Endothelial cell of umbilical vein (primary cell): ENCODE measurements at regions of chr20 and their contacts with region 1.

Region 1: DNA sequence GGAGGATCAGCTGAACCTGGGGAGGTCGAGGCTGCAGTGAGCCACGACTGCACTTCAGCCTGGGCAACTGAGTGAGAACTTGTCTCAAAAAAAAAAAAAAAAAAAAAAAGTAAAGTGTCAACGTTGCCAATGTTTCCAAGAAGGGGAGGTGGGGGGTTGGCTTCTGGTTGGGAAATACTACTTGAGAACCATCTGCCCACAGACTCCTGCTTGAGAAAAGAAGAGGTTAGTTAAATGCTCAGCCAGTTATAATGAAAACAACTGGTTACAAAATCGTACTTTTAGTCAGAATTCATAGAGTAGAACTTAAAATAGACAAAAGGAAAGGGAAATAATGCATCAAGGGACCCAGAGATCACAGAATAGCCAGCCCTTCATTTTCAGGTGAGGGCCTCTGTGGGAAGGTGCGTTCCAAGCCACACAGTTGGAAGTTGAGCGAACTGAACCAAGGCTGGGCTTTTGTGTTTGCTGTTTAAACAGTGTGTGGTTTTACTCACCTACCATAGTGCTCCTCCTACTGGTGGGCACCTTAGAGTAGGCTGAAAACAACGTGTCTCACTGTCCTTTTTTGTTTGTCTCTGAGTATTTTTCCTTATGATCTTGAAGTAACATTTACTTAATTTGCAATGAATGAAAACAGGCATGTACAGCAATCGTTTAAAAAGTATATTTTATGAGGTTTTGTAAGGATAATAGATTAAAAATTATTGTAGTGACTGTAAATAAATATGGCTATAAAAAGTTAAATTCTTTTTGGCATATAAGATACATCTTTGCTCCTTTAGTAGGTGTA is 200.7 kb downstream of the BCAS1 start:
- DNase-seq: peak; percentile 82
- H3K4me3 ChIP-seq: no peak overlapping the region
- H3K27ac ChIP-seq: no peak overlapping the region
- H3K4me1 ChIP-seq: peaks cover 22% of the 10 kb centered on the region
- H3K27me3 ChIP-seq: no peaks in the 10 kb centered on the region
- CTCF ChIP-seq: peak; percentile 74 to 77
- POLR2A ChIP-seq: no peak

Region 2: GRCh38 chr20:53578492-53579222 is 291.0 kb before region 1 on chr20:
- CTCF ChIA-PET with region 1: interaction called, 11 read pairs
- POLR2A ChIA-PET with region 1: no interaction called
- dilution Hi-C with region 1: no loop called
- intact Hi-C with region 1: loop called (anchors 1 kb)
- DNase-seq: peak; percentile 90
- H3K4me3 ChIP-seq: peak overlapping the region in 1 of 3 experiments; percentile 23
- H3K27ac ChIP-seq: peak overlapping the region; percentile 43
- H3K4me1 ChIP-seq: peaks cover 20% of the 10 kb centered on the region
- H3K27me3 ChIP-seq: no peaks in the 10 kb centered on the region
- CTCF ChIP-seq: peak; percentile 60 to 75
- POLR2A ChIP-seq: peak; percentile 13

Region 3: GRCh38 chr20:53643031-53643832 is 226.4 kb before region 1 on chr20:
- CTCF ChIA-PET with region 1: interaction called, 3 read pairs
- POLR2A ChIA-PET with region 1: no interaction called
- dilution Hi-C with region 1: no loop called
- intact Hi-C with region 1: loop called (anchors 5 kb)
- DNase-seq: peak; percentile 91
- H3K4me3 ChIP-seq: peak overlapping the region in 1 of 3 experiments; percentile 28
- H3K27ac ChIP-seq: peak overlapping the region; percentile 89
- H3K4me1 ChIP-seq: peaks cover 20% of the 10 kb centered on the region
- H3K27me3 ChIP-seq: no peaks in the 10 kb centered on the region
- CTCF ChIP-seq: no peak
- POLR2A ChIP-seq: no peak

Region 4: DNA sequence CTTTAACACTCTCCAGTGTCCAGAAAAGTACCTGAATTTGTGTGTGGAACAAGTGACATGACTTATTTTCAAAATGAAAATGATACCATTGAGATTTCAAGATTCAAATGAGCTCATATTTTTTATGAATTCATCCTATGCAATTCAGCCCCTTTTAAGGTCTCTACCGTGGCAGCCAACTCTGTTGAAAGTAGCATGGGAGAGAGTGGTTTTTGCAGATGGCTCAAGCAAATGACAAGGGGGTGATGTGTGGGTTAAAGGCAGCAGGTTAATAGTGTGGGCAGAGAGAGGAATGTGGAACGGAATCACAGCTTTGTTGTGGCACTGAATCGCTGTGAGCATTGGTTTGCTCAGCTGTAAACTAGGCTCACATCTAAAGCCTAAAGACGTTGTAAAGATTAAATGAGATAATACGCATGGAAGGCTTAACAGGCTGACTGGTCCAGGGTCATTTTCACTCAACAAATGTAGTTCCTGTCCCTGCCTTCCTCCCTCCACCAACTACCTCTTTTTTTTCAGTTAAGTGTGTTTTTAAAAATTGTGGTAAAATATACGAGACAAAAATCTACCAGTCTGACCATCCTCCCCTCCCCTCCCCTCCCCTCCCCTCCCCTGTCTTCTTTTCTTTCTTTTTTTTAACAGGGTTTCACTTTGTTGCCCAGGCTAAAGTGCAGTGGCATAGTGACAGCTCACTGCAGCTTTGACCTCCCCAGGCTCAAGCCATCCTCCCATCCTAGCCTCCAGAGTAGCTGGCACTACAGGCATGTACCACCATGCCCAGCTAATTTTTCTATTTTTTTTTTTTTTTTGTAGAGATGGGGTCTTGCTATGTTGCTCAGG is 161.3 kb before region 1 on chr20:
- CTCF ChIA-PET with region 1: no interaction called
- POLR2A ChIA-PET with region 1: no interaction called
- dilution Hi-C with region 1: no loop called
- intact Hi-C with region 1: no loop called
- DNase-seq: no peak
- H3K4me3 ChIP-seq: no peak overlapping the region
- H3K27ac ChIP-seq: no peak overlapping the region
- H3K4me1 ChIP-seq: no peaks in the 10 kb centered on the region
- H3K27me3 ChIP-seq: no peaks in the 10 kb centered on the region
- CTCF ChIP-seq: no peak
- POLR2A ChIP-seq: no peak

Region 5: DNA sequence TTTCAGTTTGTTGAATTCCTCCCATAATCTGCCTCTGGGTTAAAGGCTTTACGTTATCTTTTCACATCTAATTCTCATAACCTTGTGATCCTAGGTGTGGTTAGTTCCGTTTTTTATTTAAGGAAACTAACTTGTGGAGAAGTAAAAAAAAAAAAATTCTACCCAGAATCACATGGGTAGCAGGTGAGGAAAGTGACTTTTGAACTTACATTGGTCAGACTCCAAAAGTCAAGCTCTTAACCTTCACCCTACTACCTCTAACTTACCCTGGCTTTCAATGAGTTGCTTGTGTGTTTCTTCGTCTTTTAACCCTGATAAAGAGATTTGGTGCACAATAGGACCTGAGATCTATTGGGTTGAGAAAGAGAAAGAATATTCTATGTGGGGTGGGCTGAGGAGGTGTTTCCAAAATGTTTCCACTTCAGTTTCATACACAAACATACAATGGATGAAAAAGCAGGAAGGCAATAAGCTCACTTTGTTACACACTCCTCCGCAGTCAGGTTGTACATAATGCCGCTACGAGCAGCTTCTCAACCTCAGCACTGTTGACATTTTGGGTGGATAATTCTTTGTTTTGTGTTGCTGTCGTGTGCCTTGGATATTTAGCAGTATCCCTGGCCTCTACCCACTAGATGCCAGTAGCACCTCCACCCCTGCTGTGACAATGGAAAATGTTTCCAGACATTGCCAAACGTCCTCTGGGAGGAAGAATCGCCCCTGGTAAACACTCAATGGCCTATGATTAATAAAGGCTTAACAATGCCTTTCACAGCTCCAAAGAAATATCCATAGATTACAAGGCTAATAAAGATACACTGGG is 83.0 kb before region 1 on chr20:
- CTCF ChIA-PET with region 1: interaction called, 3 read pairs
- POLR2A ChIA-PET with region 1: interaction called, 3 read pairs
- dilution Hi-C with region 1: no loop called
- intact Hi-C with region 1: loop called (anchors 1 kb)
- DNase-seq: peak; percentile 70
- H3K4me3 ChIP-seq: no peak overlapping the region
- H3K27ac ChIP-seq: no peak overlapping the region
- H3K4me1 ChIP-seq: peaks cover 24% of the 10 kb centered on the region
- H3K27me3 ChIP-seq: no peaks in the 10 kb centered on the region
- CTCF ChIP-seq: peak in 1 of 2 donors; percentile 6
- POLR2A ChIP-seq: no peak

Region 6: DNA sequence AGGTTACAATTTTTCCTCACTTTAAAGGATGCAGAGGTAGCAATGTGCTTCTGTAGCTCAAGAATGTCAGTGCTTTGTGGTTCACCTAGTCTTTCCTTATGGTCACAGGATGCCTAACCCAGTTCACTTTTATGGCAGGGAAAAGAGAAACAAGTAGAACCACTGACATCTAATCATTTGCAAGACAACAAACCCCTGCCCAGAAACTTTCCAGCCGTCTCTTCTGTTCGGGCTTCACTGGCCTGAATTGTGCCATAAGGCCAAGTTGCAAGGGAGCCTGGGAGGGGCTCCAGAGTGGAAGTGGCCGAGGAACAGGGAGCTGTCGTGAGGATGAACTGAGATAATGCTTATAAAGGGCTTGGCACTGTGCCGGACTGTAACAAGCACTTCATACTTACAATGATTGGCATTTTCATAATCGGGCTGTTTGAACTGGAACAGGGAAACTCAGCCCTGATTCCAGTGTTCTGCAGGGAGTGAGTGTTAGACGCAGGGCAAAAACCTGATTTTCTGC is 11.9 kb before region 1 on chr20:
- CTCF ChIA-PET with region 1: interaction called, 11 read pairs
- POLR2A ChIA-PET with region 1: no interaction called
- dilution Hi-C with region 1: no loop called
- intact Hi-C with region 1: no loop called
- DNase-seq: peak; percentile 27
- H3K4me3 ChIP-seq: no peak overlapping the region
- H3K27ac ChIP-seq: no peak overlapping the region
- H3K4me1 ChIP-seq: no peaks in the 10 kb centered on the region
- H3K27me3 ChIP-seq: no peaks in the 10 kb centered on the region
- CTCF ChIP-seq: no peak
- POLR2A ChIP-seq: no peak